ENCODE measurements at regions of chr17 and their contacts with region 1.

Region 1: GRCh38 chr17:74042744-74043486 is 160.6 kb upstream of the RPL38 start:
- DNase-seq: no peak
- ATAC-seq: peak in 1 of 8 donors; percentile 29
- H3K4me3 ChIP-seq: no peak overlapping the region
- H3K27ac ChIP-seq: no peak overlapping the region
- H3K4me1 ChIP-seq: no peaks in the 10 kb centered on the region
- H3K27me3 ChIP-seq: peaks cover 0 to 23% (median 2%) of the 10 kb centered on the region in 7 donors
- CTCF ChIP-seq: no peak

Region 2: GRCh38 chr17:73782641-73783381 is 260.1 kb before region 1 on chr17:
- intact Hi-C with region 1: no loop called
- DNase-seq: no peak
- ATAC-seq: no peak
- H3K4me3 ChIP-seq: no peak overlapping the region
- H3K27ac ChIP-seq: no peak overlapping the region
- H3K4me1 ChIP-seq: peaks cover 0 to 32% (median 13%) of the 10 kb centered on the region in 9 donors
- H3K27me3 ChIP-seq: peaks cover 0 to 39% (median 16%) of the 10 kb centered on the region in 7 donors
- CTCF ChIP-seq: no peak

Region 3: GRCh38 chr17:73984941-73985340 is 58.0 kb before region 1 on chr17:
- intact Hi-C with region 1: loop called in 1 of 10 experiments (anchors 10 kb)
- DNase-seq: no peak
- ATAC-seq: no peak
- H3K4me3 ChIP-seq: no peak overlapping the region
- H3K27ac ChIP-seq: no peak overlapping the region
- H3K4me1 ChIP-seq: peaks cover 0 to 4% (median 0%) of the 10 kb centered on the region in 9 donors
- H3K27me3 ChIP-seq: peaks cover 0 to 67% (median 23%) of the 10 kb centered on the region in 7 donors
- CTCF ChIP-seq: no peak

Region 4: DNA sequence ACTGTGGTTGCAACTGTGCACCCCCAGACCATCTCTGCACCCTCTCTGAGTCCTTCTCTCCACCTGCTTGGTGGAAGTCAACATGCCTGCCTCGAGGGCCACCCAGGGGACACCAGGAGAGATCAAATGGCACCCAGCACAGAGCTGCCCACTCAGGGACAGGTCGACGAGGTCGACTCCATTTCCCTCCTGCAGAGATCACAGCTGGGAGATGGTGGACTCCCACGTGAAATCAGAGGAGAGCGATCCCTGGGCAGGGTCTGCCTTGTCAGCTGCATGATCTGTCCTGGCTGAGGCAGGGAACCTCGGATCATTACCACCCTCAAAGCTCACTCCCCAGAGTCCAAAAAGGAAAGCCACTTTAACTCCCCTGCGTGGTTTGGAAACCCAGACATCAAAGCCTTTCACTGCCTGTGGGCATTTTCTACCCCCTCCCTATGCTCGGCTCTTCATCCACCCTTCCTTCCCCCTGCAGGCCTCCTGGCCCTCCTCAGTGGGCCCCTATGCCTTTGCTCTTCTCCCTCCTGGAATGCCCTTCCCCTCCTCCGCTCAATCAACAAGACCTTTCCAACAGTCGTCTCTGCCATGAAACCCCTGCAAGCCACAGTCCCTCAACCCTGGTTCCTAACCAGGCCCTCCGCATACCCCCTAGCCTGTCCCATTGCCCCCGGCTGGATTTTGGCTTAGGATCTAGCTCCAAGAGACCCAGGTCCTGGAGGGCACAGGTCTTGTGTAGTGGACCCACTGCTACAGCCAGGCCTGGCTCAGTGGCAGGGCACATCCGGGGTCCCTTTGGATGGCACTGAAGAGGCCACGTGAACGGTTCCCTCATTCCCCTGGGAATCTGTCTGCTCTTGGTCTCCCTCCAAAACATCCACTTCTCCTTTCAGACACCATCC is 56.8 kb after region 1 on chr17:
- intact Hi-C with region 1: loop called in 1 of 10 experiments (anchors 10 kb)
- DNase-seq: no peak
- ATAC-seq: no peak
- H3K4me3 ChIP-seq: no peak overlapping the region
- H3K27ac ChIP-seq: no peak overlapping the region
- H3K4me1 ChIP-seq: no peaks in the 10 kb centered on the region
- H3K27me3 ChIP-seq: peaks cover 0 to 75% (median 49%) of the 10 kb centered on the region in 7 donors
- CTCF ChIP-seq: no peak

Region 5: GRCh38 chr17:74152591-74153455 is 109.9 kb after region 1 on chr17:
- intact Hi-C with region 1: no loop called
- DNase-seq: no peak
- ATAC-seq: no peak
- H3K4me3 ChIP-seq: no peak overlapping the region
- H3K27ac ChIP-seq: no peak overlapping the region
- H3K4me1 ChIP-seq: no peaks in the 10 kb centered on the region
- H3K27me3 ChIP-seq: peaks cover 0 to 58% (median 21%) of the 10 kb centered on the region in 7 donors
- CTCF ChIP-seq: no peak

Measured in heart right ventricle (tissue), 16 donors.